WTC11 (cell line): ENCODE measurements at regions of chr3 and their contacts with region 1.

Region 1: DNA sequence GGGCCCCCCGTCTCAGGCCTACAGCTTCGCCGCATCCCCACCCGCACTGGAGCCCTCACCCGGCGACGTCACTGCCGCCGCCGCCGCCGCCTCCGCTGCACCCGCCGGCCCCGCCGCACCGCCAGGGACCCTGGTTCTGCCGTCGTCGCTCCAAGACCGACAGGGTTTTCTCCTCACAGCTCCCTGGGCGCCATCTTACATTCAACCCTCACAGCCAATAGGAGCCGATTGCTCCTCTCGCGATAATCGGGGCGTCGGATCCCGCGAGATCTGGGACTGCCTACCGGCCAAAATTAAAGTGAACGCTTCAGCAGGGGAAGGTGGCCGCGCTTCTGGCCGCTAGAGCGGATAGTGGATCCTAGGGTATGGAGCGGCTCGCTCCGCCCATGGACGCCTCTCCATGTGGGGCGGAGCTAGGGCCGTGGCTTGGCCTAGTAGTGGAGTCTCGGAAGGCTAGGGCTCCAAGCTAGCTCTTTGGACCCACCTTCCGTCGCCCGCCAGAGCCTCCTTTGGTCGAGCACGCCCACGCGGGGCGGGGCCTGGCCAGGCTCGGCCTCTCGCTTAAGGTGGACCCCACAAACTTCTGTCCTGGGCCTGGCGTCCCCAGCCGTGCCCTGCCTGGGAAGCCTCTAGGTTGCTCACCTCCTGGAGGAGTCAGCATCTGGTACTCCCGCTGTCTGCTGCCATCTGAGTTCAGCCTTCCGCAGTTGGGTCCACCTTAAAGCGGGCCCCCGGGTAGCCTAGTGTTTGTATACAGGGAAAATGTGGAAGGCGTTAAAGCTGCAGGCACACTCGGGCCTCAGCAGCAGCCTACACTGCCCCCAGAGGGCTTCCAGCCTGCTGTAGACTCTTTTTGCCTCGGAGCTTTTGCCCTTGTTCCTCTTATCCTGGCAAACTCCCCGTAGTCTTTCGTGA is at the start of gene QRICH1:
- DNase-seq: peak; percentile 98
- ATAC-seq: peak; percentile 84
- H3K4me3 Mint-ChIP-seq: peak within 1 kb of the TSS; percentile 89
- H3K27ac Mint-ChIP-seq: peak within 1 kb of the TSS; percentile 97
- H3K4me1 Mint-ChIP-seq: peaks cover 8% of the 10 kb centered on the region
- H3K27me3 Mint-ChIP-seq: no peaks in the 10 kb centered on the region
- CTCF ChIP-seq: no peak
- total RNA-seq, gene QRICH1: 110 to 123 TPM (median 120 TPM) in 3 replicates

Region 2: GRCh38 chr3:48784426-48785120 is 309.5 kb before region 1 on chr3:
- CTCF ChIA-PET with region 1: no interaction called
- POLR2A ChIA-PET with region 1: no interaction called
- DNase-seq: no peak
- ATAC-seq: no peak
- H3K4me3 Mint-ChIP-seq: no peak overlapping the region
- H3K27ac Mint-ChIP-seq: no peak overlapping the region
- H3K4me1 Mint-ChIP-seq: no peaks in the 10 kb centered on the region
- H3K27me3 Mint-ChIP-seq: no peaks in the 10 kb centered on the region
- CTCF ChIP-seq: no peak

Region 3: GRCh38 chr3:49007068-49007770 is 86.9 kb before region 1 on chr3 and contains the start of gene WDR6:
- CTCF ChIA-PET with region 1: interaction called, 18 read pairs
- POLR2A ChIA-PET with region 1: interaction called, 20 read pairs
- DNase-seq: peak; percentile 97
- ATAC-seq: peak; percentile 90
- H3K4me3 Mint-ChIP-seq: peak within 1 kb of the TSS; percentile 99
- H3K27ac Mint-ChIP-seq: peak within 1 kb of the TSS; percentile 100
- H3K4me1 Mint-ChIP-seq: peaks cover 15% of the 10 kb centered on the region
- H3K27me3 Mint-ChIP-seq: no peaks in the 10 kb centered on the region
- CTCF ChIP-seq: 0 out of 2 replicates have a peak, but pooled peaks have one; percentile 37
- total RNA-seq, gene WDR6: 204 to 213 TPM (median 209 TPM) in 3 replicates

Region 4: GRCh38 chr3:49028673-49029562 is 65.2 kb before region 1 on chr3 and contains the start of gene IMPDH2:
- CTCF ChIA-PET with region 1: interaction called, 9 read pairs
- POLR2A ChIA-PET with region 1: interaction called, 23 read pairs
- DNase-seq: peak; percentile 91
- ATAC-seq: peak; percentile 91
- H3K4me3 Mint-ChIP-seq: peak within 1 kb of the TSS; percentile 90
- H3K27ac Mint-ChIP-seq: peak within 1 kb of the TSS; percentile 92
- H3K4me1 Mint-ChIP-seq: peaks cover 17% of the 10 kb centered on the region
- H3K27me3 Mint-ChIP-seq: no peaks in the 10 kb centered on the region
- CTCF ChIP-seq: no peak
- total RNA-seq, gene IMPDH2: 449 to 472 TPM (median 452 TPM) in 3 replicates

Region 5: DNA sequence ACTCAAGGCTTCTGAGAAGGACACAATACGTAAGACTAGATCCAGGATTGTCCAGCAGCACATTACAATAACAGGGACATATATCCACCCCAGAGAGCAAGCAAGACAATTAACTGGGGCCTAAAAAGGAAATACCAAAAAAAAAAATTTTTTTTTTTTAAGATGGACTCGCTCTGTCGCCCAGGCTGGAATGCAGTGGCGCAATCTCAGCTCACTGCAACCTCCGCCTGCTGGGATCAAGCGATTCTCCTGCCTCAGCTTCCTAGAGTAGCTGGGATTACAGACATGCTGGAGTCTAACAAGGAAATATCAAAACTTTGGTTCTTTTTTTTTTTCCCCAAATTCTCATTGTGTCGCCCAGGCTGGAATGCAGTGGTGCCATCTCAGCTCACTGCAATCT is 36.1 kb before region 1 on chr3:
- CTCF ChIA-PET with region 1: no interaction called
- POLR2A ChIA-PET with region 1: no interaction called
- DNase-seq: no peak
- ATAC-seq: no peak
- H3K4me3 Mint-ChIP-seq: no peak overlapping the region
- H3K27ac Mint-ChIP-seq: no peak overlapping the region
- H3K4me1 Mint-ChIP-seq: no peaks in the 10 kb centered on the region
- H3K27me3 Mint-ChIP-seq: no peaks in the 10 kb centered on the region
- CTCF ChIP-seq: no peak

Region 6: GRCh38 chr3:49076646-49077045 is 17.5 kb before region 1 on chr3:
- CTCF ChIA-PET with region 1: no interaction called
- POLR2A ChIA-PET with region 1: no interaction called
- DNase-seq: no peak
- ATAC-seq: no peak; the same call in 1 of the 2 replicates
- H3K4me3 Mint-ChIP-seq: no peak overlapping the region
- H3K27ac Mint-ChIP-seq: peak overlapping the region; percentile 22; the same call in 1 of the 2 replicates
- H3K4me1 Mint-ChIP-seq: no peaks in the 10 kb centered on the region
- H3K27me3 Mint-ChIP-seq: no peaks in the 10 kb centered on the region
- CTCF ChIP-seq: no peak

Region 7: DNA sequence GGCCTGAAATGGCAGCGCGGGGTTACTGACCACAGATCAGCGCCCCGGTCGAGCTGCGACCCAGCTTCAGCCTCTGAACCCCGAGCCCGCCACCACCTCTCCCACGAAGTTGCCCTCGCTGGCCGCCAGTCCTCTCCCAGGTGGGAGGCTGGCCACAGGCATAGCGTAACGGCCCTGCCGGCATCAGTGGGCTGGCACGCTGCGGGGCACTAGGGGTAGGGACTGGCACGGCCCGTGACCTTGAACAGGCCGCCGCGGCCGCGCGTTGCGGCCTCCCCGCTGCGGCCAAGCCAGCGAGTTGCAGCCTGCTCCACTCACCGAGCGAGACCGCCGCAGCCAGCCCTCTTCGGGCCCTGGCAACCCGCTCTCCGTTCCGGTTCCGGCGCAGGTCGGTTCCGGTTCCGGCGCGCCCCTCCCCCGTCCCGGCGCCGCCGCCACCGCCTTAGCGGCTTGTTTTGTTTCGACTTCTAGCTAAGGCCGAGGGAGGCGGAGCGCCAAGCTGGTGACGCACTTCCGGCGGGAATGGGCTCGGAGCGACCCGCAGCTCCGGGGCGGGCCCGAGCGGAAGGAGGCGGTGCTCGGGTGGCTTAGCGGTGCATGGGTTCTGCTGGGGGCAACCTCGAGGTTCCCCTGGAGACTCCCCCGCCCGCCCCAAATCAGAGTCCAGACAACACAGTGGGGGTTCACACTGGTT is 26.5 kb after region 1 on chr3 and contains the start of gene USP19:
- CTCF ChIA-PET with region 1: interaction called, 19 read pairs
- POLR2A ChIA-PET with region 1: interaction called, 20 read pairs
- DNase-seq: peak; percentile 93
- ATAC-seq: peak; percentile 95
- H3K4me3 Mint-ChIP-seq: peak within 1 kb of the TSS; percentile 82
- H3K27ac Mint-ChIP-seq: peak within 1 kb of the TSS; percentile 87
- H3K4me1 Mint-ChIP-seq: peaks cover 4% of the 10 kb centered on the region
- H3K27me3 Mint-ChIP-seq: no peaks in the 10 kb centered on the region
- CTCF ChIP-seq: no peak
- total RNA-seq, gene USP19: 72.4 to 75.8 TPM (median 73.3 TPM) in 3 replicates

Region 8: DNA sequence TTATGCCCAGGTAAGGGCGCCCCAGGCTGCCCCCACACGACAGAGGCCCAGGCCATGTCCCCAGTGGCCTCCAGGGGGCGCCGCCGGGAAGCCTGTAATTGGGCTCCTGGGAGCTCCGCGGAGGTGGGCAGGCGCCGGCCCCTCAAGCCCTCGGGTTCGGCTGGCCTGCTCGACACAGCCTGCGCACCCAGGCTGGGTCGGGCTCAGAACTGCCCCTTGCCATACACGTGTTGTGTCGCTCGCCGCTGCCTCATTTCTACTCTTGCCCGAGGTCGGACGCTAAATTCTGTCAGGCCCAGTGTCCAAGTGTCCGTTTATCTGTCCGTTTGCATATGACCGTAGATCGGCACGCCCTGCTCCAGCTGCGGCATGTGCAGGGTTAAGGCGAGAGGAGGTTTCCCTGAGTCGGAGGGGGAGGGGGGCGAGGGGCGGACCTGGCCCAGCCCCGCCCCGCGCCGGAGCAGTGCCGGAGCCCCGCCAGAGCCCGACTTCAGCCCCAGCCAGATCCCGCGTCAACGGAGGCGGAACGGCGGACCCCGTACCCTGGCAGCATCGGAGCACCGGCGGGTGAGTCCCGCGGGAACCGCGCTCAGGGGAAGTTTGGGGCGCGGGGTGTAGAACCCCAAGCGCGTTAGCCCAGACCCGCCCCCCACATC is 77.1 kb after region 1 on chr3 and contains the start of gene KLHDC8B:
- CTCF ChIA-PET with region 1: interaction called, 23 read pairs
- POLR2A ChIA-PET with region 1: interaction called, 4 read pairs
- DNase-seq: peak; percentile 96
- ATAC-seq: peak; percentile 85
- H3K4me3 Mint-ChIP-seq: peak within 1 kb of the TSS; percentile 82
- H3K27ac Mint-ChIP-seq: peak within 1 kb of the TSS; percentile 64
- H3K4me1 Mint-ChIP-seq: peaks cover 26% of the 10 kb centered on the region
- H3K27me3 Mint-ChIP-seq: peaks cover 20% of the 10 kb centered on the region
- CTCF ChIP-seq: peak; percentile 96
- total RNA-seq, gene KLHDC8B: 13.5 to 21.5 TPM (median 16.1 TPM) in 3 replicates